CD8-positive, alpha-beta T cell (primary cell): ENCODE measurements at regions of chr22 and their contacts with region 1.

Region 1: DNA sequence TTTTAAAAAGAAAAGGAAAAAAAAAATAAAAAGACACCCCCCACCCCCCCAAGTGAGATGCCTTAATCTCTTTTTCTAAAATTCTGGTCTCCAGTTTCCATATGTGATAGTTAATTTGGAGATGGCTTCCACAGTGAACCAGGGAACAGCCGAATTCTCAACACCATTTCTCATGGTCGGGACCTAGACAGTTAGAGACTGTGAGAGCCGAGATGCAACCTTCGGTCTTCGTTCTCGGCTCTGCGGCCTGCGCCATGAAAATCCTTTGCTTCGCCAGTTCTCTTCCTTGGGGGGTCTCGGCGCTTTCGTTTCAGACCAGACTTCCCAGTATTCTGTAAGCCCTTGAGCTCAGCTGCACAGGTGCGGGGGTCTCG is 723 bp downstream of the CACNG2 start:
- DNase-seq: no peak
- ATAC-seq: no peak
- H3K4me3 ChIP-seq: no peak overlapping the region
- H3K4me3 Mint-ChIP-seq: no peak overlapping the region
- H3K27ac ChIP-seq: no peak overlapping the region
- H3K27ac Mint-ChIP-seq: no peak overlapping the region
- H3K4me1 ChIP-seq: no peaks in the 10 kb centered on the region
- H3K4me1 Mint-ChIP-seq: peaks cover 6% of the 10 kb centered on the region
- H3K27me3 ChIP-seq: peaks cover 10 to 32% of the 10 kb centered on the region in 2 experiments
- H3K27me3 Mint-ChIP-seq: peaks cover 80% of the 10 kb centered on the region
- CTCF ChIP-seq: no peak

Region 2: GRCh38 chr22:36644333-36644757 is 58.5 kb before region 1 on chr22:
- CTCF ChIA-PET with region 1: no interaction called
- POLR2A ChIA-PET with region 1: no interaction called
- intact Hi-C with region 1: loop called in 1 of 2 experiments (anchors 2 kb)
- DNase-seq: peak in 2 of 9 experiments; percentile 22 to 33
- ATAC-seq: no peak
- H3K4me3 ChIP-seq: no peak overlapping the region
- H3K4me3 Mint-ChIP-seq: no peak overlapping the region
- H3K27ac ChIP-seq: no peak overlapping the region
- H3K27ac Mint-ChIP-seq: no peak overlapping the region
- H3K4me1 ChIP-seq: no peaks in the 10 kb centered on the region
- H3K4me1 Mint-ChIP-seq: no peaks in the 10 kb centered on the region
- H3K27me3 ChIP-seq: peaks cover 3 to 9% of the 10 kb centered on the region in 2 experiments
- H3K27me3 Mint-ChIP-seq: peaks cover 54% of the 10 kb centered on the region
- CTCF ChIP-seq: no peak

Region 3: GRCh38 chr22:36790648-36791047 is 87.8 kb after region 1 on chr22:
- CTCF ChIA-PET with region 1: no interaction called
- POLR2A ChIA-PET with region 1: no interaction called
- intact Hi-C with region 1: no loop called
- DNase-seq: no peak
- ATAC-seq: no peak
- H3K4me3 ChIP-seq: no peak overlapping the region
- H3K4me3 Mint-ChIP-seq: no peak overlapping the region
- H3K27ac ChIP-seq: no peak overlapping the region
- H3K27ac Mint-ChIP-seq: no peak overlapping the region
- H3K4me1 ChIP-seq: no peaks in the 10 kb centered on the region
- H3K4me1 Mint-ChIP-seq: no peaks in the 10 kb centered on the region
- H3K27me3 ChIP-seq: no peaks in the 10 kb centered on the region
- H3K27me3 Mint-ChIP-seq: no peaks in the 10 kb centered on the region
- CTCF ChIP-seq: no peak

Region 4: GRCh38 chr22:36856121-36856791 is 153.4 kb after region 1 on chr22:
- CTCF ChIA-PET with region 1: no interaction called
- POLR2A ChIA-PET with region 1: no interaction called
- intact Hi-C with region 1: no loop called
- DNase-seq: peak; percentile 86 to 99 (median 94)
- ATAC-seq: peak; percentile 78
- H3K4me3 ChIP-seq: no peak overlapping the region
- H3K4me3 Mint-ChIP-seq: peak overlapping the region; percentile 13
- H3K27ac ChIP-seq: no peak overlapping the region
- H3K27ac Mint-ChIP-seq: no peak overlapping the region
- H3K4me1 ChIP-seq: peaks cover 16% of the 10 kb centered on the region
- H3K4me1 Mint-ChIP-seq: peaks cover 13% of the 10 kb centered on the region
- H3K27me3 ChIP-seq: no peaks in the 10 kb centered on the region
- H3K27me3 Mint-ChIP-seq: no peaks in the 10 kb centered on the region
- CTCF ChIP-seq: peak; percentile 100